IMR-90 (cell line): ENCODE measurements at regions of chr11 and their contacts with region 1.

Region 1: GRCh38 chr11:6531267-6531752 is 34.2 kb downstream of the DNHD1 start:
- DNase-seq: peak; percentile 52
- ATAC-seq: peak; percentile 95
- H3K4me3 ChIP-seq: no peak overlapping the region
- H3K27ac ChIP-seq: no peak overlapping the region
- H3K4me1 ChIP-seq: no peaks in the 10 kb centered on the region
- H3K27me3 ChIP-seq: no peaks in the 10 kb centered on the region
- CTCF ChIP-seq: peak; percentile 74
- POLR2A ChIP-seq: no peak
- RAD21 ChIP-seq: peak; percentile 83

Region 2: GRCh38 chr11:6455070-6455469 is 76.2 kb before region 1 on chr11:
- CTCF ChIA-PET with region 1: no interaction called
- POLR2A ChIA-PET with region 1: no interaction called
- dilution Hi-C with region 1: no loop called
- in situ Hi-C with region 1: no loop called
- intact Hi-C with region 1: no loop called
- DNase-seq: no peak
- ATAC-seq: no peak
- H3K4me3 ChIP-seq: no peak overlapping the region
- H3K27ac ChIP-seq: no peak overlapping the region
- H3K4me1 ChIP-seq: no peaks in the 10 kb centered on the region
- H3K27me3 ChIP-seq: no peaks in the 10 kb centered on the region
- CTCF ChIP-seq: no peak
- POLR2A ChIP-seq: no peak
- RAD21 ChIP-seq: no peak

Region 3: GRCh38 chr11:6603287-6604080 is 72.2 kb after region 1 on chr11 and contains the starts of genes ILK and RRP8:
- CTCF ChIA-PET with region 1: interaction called, 4 read pairs
- POLR2A ChIA-PET with region 1: no interaction called
- dilution Hi-C with region 1: no loop called
- in situ Hi-C with region 1: no loop called
- intact Hi-C with region 1: loop called (anchors 1 kb)
- DNase-seq: peak; percentile 86
- ATAC-seq: peak; percentile 80
- H3K4me3 ChIP-seq: peak within 1 kb of the TSS; percentile 90
- H3K27ac ChIP-seq: peak within 1 kb of the TSS; percentile 95
- H3K4me1 ChIP-seq: peaks cover 20% of the 10 kb centered on the region
- H3K27me3 ChIP-seq: no peaks in the 10 kb centered on the region
- CTCF ChIP-seq: peak; percentile 27
- POLR2A ChIP-seq: peak; percentile 30; the same call in 1 of the 2 replicates
- RAD21 ChIP-seq: peak; percentile 26
- total RNA-seq, gene ILK: 272 and 339 TPM in 2 replicates
- total RNA-seq, gene RRP8: 11.1 and 11.5 TPM in 2 replicates

Region 4: DNA sequence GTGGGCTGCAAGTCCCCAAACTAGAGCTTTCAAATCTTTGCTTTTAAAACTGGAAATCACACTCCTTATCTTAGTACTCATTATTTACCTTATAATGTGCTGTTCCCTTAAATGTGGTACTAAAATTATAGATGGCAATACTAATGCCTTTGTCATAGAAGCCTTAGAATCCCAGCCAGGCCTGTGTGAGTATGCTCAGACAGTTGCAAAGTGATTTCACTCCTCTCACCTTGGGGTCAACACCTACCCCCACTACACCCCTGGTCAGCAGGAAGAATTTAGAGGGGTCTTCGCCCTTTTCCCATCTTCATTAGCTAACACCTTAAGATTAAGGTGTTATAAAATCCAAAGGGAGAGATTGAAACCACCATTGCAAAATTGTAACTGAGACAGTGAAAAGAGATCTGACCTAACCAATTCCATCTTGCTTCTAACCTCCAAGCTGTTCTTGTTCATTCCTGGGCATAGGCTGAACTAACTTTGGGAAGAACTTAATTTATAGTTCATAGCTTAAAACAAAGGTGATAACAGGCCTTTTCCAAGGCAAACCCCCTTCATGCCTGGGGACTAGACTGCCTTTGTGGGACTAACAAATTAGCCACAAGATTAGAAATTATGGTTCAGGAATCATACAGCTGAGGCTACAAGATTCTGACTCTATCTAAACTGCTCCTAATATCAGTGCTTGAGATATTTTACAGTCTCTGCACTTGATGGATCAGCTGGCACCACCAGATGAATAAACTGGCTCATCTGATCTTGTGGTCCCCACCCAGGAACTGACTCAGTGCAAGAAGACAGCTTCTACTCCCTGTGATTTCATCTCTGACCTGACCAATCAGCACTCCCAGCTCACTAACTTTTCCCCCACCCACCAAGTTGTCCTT is 162.3 kb after region 1 on chr11:
- CTCF ChIA-PET with region 1: interaction called, 12 read pairs
- POLR2A ChIA-PET with region 1: no interaction called
- dilution Hi-C with region 1: no loop called
- in situ Hi-C with region 1: no loop called
- intact Hi-C with region 1: no loop called
- DNase-seq: peak; percentile 84
- ATAC-seq: peak; percentile 76
- H3K4me3 ChIP-seq: no peak overlapping the region
- H3K27ac ChIP-seq: no peak overlapping the region
- H3K4me1 ChIP-seq: peaks cover 6% of the 10 kb centered on the region
- H3K27me3 ChIP-seq: no peaks in the 10 kb centered on the region
- CTCF ChIP-seq: no peak
- POLR2A ChIP-seq: no peak
- RAD21 ChIP-seq: no peak

Region 5: DNA sequence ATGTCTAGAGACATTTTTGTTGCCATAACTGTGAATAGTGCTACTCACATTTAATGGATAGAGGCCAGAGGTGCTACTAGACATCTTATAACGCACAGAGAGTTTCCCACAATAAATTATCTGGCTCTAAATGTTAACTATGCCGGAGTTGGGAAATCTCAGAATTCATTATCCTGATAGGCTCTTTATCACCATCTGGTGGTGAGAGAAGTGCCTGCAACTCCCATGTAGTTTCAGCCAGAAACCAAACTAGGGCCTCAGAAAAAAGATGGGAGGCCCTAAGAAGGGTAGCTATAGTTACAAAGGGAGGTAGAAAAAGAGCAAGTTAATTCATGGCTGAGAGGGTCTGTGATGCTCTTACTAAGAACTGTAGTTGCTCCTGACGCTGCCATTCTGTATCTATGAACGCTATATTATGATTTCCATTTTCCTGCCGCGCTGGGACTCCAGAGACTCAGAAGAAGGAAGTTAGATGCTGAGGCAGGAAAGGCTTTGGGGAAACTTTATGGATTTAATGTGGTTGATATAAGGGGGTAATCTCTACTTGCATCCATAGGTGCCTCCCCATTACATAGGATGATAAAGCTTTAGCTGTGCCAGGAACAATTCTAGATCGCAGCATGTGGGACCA is 174.7 kb after region 1 on chr11:
- CTCF ChIA-PET with region 1: interaction called, 15 read pairs
- POLR2A ChIA-PET with region 1: no interaction called
- dilution Hi-C with region 1: no loop called
- in situ Hi-C with region 1: no loop called
- intact Hi-C with region 1: loop called (anchors 1 kb)
- DNase-seq: peak; percentile 63
- ATAC-seq: peak; percentile 93
- H3K4me3 ChIP-seq: no peak overlapping the region
- H3K27ac ChIP-seq: no peak overlapping the region
- H3K4me1 ChIP-seq: no peaks in the 10 kb centered on the region
- H3K27me3 ChIP-seq: 0 out of 2 replicates have a peak, but pooled peaks cover 2% of the 10 kb centered on the region
- CTCF ChIP-seq: peak; percentile 89
- POLR2A ChIP-seq: no peak
- RAD21 ChIP-seq: peak; percentile 79